CD14-positive monocyte (primary cell): ENCODE measurements at regions of chr15 and their contacts with region 1.

Region 1: DNA sequence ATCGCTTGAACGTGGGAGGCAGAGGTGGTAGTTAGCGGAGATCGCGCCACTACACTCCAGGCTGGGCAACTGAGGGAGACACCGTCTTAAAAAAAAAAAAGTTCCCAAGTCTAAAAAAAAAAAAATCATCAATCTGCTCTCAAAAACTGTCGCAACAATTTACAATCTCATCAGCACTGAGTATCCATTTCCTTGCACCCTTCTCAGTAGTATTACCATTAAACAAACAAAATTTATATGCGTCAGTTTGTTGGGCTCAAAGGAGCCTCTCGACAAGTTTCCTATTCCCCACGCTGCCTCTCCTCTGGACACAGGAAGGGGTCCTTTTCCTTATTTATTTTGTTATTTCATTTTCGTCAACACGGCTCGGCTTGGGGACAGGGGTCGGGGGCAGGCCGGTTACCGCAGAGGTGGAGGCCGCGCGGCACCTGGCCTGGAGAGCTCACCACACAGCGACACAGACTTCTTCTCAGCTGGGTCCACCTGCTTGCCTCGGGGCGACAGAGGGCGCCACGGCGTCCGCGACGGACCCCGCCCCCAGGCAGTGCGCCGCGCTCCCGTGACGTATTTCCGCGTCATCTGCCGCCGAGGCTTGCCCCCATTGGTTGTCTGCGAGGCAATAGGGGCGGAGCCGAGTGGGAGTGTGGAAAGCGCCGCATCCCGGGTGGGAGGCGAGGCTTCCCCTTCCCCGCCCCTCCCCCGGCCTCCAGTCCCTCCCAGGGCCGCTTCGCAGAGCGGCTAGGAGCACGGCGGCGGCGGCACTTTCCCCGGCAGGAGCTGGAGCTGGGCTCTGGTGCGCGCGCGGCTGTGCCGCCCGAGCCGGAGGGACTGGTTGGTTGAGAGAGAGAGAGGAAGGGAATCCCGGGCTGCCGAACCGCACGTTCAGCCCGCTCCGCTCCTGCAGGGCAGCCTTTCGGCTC is at the start of gene MAP2K1:
- DNase-seq: peak; percentile 95 to 98 (median 98)
- H3K4me3 ChIP-seq: peak within 1 kb of the TSS; percentile 86 to 95 (median 93)
- H3K4me3 Mint-ChIP-seq: peak within 1 kb of the TSS; percentile 96 to 100
- H3K27ac ChIP-seq: peak within 1 kb of the TSS; percentile 59 to 89
- H3K27ac Mint-ChIP-seq: peak within 1 kb of the TSS; percentile 94 to 98 (median 97)
- H3K4me1 ChIP-seq: peaks cover 53 to 58% of the 10 kb centered on the region in 2 donors
- H3K4me1 Mint-ChIP-seq: peaks cover 56% of the 10 kb centered on the region
- H3K27me3 ChIP-seq: no peaks in the 10 kb centered on the region
- H3K27me3 Mint-ChIP-seq: no peaks in the 10 kb centered on the region
- CTCF ChIP-seq: peak; percentile 75
- polyA plus RNA-seq, gene MAP2K1: 41.3 to 71.1 (median 64.5) TPM

Region 2: GRCh38 chr15:66504563-66505429 is 118.3 kb after region 1 on chr15 and contains the starts of genes RPL4 and ZWILCH:
- intact Hi-C with region 1: loop called in 1 of 2 experiments (anchors 5 kb)
- DNase-seq: peak; percentile 83 to 86 (median 86)
- H3K4me3 ChIP-seq: peak within 1 kb of the TSS; percentile 92 to 98 (median 97)
- H3K4me3 Mint-ChIP-seq: peak within 1 kb of the TSS; percentile 100
- H3K27ac ChIP-seq: peak within 1 kb of the TSS; percentile 88 to 92
- H3K27ac Mint-ChIP-seq: peak within 1 kb of the TSS; percentile 94 to 99 (median 97)
- H3K4me1 ChIP-seq: peaks cover 25 to 40% of the 10 kb centered on the region in 2 donors
- H3K4me1 Mint-ChIP-seq: peaks cover 30% of the 10 kb centered on the region
- H3K27me3 ChIP-seq: no peaks in the 10 kb centered on the region
- H3K27me3 Mint-ChIP-seq: peaks cover 0 to 2% (median 0%) of the 10 kb centered on the region in 3 donors
- CTCF ChIP-seq: no peak
- polyA plus RNA-seq, gene RPL4: 533 to 1,696 (median 536) TPM
- polyA plus RNA-seq, gene ZWILCH: 1.4 to 3.1 (median 2.4) TPM